IMR-90 (cell line): ENCODE measurements at regions of chr3 and their contacts with region 1.

Region 1: DNA sequence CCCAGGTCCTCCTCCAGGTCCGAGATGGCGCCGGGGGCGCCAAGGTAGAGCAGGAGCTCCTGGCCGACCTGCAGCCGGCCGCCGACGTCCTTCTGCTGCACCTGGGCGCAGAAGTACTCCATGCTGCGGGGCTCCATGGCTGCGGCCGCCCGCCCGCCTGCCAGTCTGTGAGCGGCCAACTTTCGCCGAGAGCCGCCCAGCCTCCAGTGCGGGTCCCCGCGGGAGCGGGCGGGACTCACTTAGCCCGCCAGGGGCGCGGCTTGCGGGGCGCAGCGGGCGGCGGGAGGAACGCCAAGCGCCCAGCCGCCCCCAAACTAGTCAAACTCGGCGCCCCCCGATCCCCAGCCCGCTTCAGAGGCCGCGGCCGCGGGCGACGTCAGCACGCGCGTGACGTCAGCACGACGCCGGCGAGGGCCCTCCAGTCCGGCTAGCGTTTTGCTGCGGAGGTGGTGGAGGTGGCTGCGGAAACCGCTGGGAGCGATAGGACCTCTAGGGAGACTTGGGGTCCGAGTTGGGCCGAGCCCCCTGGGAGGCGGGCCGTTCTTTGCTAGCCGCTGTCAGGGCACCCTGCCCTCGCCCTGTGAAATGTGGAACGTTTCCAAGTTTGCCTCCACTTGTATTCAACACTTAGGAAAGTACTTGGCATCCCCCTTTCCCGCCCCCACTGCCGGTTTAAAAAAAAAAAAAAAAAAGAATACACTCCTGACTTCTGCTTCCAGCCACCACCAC is at the start of gene CLASP2:
- DNase-seq: peak; percentile 86
- ATAC-seq: peak; percentile 95
- H3K4me3 ChIP-seq: peak within 1 kb of the TSS; percentile 99
- H3K27ac ChIP-seq: peak within 1 kb of the TSS; percentile 91
- H3K4me1 ChIP-seq: peaks cover 4% of the 10 kb centered on the region
- H3K27me3 ChIP-seq: no peaks in the 10 kb centered on the region
- CTCF ChIP-seq: no peak
- POLR2A ChIP-seq: peak; percentile 69
- RAD21 ChIP-seq: no peak
- total RNA-seq, gene CLASP2: 42.5 and 49.1 TPM in 2 replicates

Region 2: GRCh38 chr3:33113772-33114621 is 604.0 kb before region 1 on chr3 and contains the start of gene CRTAP:
- CTCF ChIA-PET with region 1: no interaction called
- POLR2A ChIA-PET with region 1: no interaction called
- dilution Hi-C with region 1: no loop called
- in situ Hi-C with region 1: no loop called
- intact Hi-C with region 1: loop called (anchors 5 kb)
- DNase-seq: peak; percentile 94
- ATAC-seq: peak; percentile 91
- H3K4me3 ChIP-seq: peak within 1 kb of the TSS; percentile 78
- H3K27ac ChIP-seq: peak within 1 kb of the TSS; percentile 82
- H3K4me1 ChIP-seq: no peaks in the 10 kb centered on the region; the same call in 1 of the 2 replicates
- H3K27me3 ChIP-seq: no peaks in the 10 kb centered on the region
- CTCF ChIP-seq: no peak; the same call in 1 of the 2 replicates
- POLR2A ChIP-seq: no peak
- RAD21 ChIP-seq: no peak
- total RNA-seq, gene CRTAP: 86.9 and 108 TPM in 2 replicates

Region 3: DNA sequence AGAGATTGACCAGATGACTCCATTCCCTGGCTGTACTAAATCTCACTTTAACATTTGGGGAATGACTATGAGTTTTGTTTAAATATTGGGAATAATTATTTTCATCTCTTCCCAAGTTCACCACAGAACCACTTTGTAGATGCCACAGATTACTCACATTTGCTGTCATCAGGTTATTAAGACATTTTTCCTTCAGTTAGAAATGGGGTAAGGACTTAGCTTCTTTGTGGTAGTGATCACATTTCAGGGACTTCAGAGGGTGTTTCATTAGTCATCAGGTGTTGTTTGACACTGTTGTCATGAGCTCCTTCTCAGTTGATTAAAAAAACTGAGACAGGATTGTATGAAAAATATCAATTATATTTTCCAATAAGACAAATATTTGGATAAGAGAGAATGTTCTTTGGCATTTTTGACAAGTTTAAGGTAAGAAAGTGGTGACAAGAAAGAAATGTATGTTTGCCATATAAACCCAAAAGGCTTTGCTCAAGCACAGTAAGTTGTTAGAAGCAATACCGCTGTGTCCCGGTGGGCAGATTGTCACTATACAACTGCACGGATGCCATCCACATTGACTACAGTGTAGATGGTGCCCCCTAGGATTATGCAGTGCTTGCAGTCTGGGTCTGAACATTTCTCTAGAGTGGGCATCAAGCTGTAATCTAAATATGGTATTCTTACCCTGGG is 418.5 kb before region 1 on chr3:
- CTCF ChIA-PET with region 1: no interaction called
- POLR2A ChIA-PET with region 1: no interaction called
- dilution Hi-C with region 1: no loop called
- in situ Hi-C with region 1: no loop called
- intact Hi-C with region 1: no loop called
- DNase-seq: peak; percentile 76
- ATAC-seq: peak; percentile 61
- H3K4me3 ChIP-seq: peak overlapping the region; percentile 33; the same call in 1 of the 2 replicates
- H3K27ac ChIP-seq: peak overlapping the region; percentile 83
- H3K4me1 ChIP-seq: peaks cover 7% of the 10 kb centered on the region
- H3K27me3 ChIP-seq: no peaks in the 10 kb centered on the region
- CTCF ChIP-seq: 0 out of 2 replicates have a peak, but pooled peaks have one; percentile 5
- POLR2A ChIP-seq: no peak
- RAD21 ChIP-seq: no peak

Region 4: GRCh38 chr3:33401781-33402180 is 316.2 kb before region 1 on chr3:
- CTCF ChIA-PET with region 1: no interaction called
- POLR2A ChIA-PET with region 1: no interaction called
- dilution Hi-C with region 1: no loop called
- in situ Hi-C with region 1: loop called (anchors 10 kb)
- intact Hi-C with region 1: loop called (anchors 10 kb)
- DNase-seq: peak; percentile 70
- ATAC-seq: peak; percentile 78
- H3K4me3 ChIP-seq: no peak overlapping the region
- H3K27ac ChIP-seq: no peak overlapping the region
- H3K4me1 ChIP-seq: peaks cover 6% of the 10 kb centered on the region
- H3K27me3 ChIP-seq: no peaks in the 10 kb centered on the region
- CTCF ChIP-seq: no peak
- POLR2A ChIP-seq: no peak
- RAD21 ChIP-seq: no peak

Region 5: GRCh38 chr3:33636125-33636850 is 81.7 kb before region 1 on chr3:
- CTCF ChIA-PET with region 1: no interaction called
- POLR2A ChIA-PET with region 1: no interaction called
- dilution Hi-C with region 1: no loop called
- in situ Hi-C with region 1: loop called (anchors 5 kb)
- intact Hi-C with region 1: loop called (anchors 1 kb)
- DNase-seq: peak; percentile 78
- ATAC-seq: peak; percentile 75
- H3K4me3 ChIP-seq: no peak overlapping the region
- H3K27ac ChIP-seq: no peak overlapping the region
- H3K4me1 ChIP-seq: no peaks in the 10 kb centered on the region
- H3K27me3 ChIP-seq: no peaks in the 10 kb centered on the region
- CTCF ChIP-seq: peak; percentile 71
- POLR2A ChIP-seq: no peak
- RAD21 ChIP-seq: peak; percentile 73

Region 6: DNA sequence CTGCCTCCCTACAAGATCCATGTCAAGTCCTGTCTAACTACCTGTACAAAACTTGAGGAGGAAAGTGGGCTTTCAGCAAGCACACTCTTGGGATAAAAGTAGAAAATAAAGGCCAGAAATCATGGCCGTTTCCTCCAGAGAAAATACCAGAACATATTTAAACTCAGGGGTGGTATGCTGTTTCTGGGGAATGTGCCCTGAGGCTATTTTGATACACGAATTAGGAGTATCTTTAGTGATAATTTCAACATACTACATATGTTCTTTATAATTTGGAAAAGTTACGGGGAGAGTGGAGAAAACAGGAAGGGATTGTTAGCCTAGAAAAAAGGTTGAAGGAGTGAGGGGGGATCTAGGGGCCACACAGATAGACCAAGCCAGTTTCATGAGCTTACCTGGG is 61.7 kb after region 1 on chr3:
- CTCF ChIA-PET with region 1: interaction called, 3 read pairs
- POLR2A ChIA-PET with region 1: no interaction called
- dilution Hi-C with region 1: no loop called
- in situ Hi-C with region 1: no loop called
- intact Hi-C with region 1: loop called (anchors 2 kb)
- DNase-seq: no peak
- ATAC-seq: no peak
- H3K4me3 ChIP-seq: no peak overlapping the region
- H3K27ac ChIP-seq: no peak overlapping the region
- H3K4me1 ChIP-seq: no peaks in the 10 kb centered on the region
- H3K27me3 ChIP-seq: no peaks in the 10 kb centered on the region
- CTCF ChIP-seq: no peak
- POLR2A ChIP-seq: no peak
- RAD21 ChIP-seq: no peak